ENCODE measurements at regions of chr9 and their contacts with region 1.

Region 1: DNA sequence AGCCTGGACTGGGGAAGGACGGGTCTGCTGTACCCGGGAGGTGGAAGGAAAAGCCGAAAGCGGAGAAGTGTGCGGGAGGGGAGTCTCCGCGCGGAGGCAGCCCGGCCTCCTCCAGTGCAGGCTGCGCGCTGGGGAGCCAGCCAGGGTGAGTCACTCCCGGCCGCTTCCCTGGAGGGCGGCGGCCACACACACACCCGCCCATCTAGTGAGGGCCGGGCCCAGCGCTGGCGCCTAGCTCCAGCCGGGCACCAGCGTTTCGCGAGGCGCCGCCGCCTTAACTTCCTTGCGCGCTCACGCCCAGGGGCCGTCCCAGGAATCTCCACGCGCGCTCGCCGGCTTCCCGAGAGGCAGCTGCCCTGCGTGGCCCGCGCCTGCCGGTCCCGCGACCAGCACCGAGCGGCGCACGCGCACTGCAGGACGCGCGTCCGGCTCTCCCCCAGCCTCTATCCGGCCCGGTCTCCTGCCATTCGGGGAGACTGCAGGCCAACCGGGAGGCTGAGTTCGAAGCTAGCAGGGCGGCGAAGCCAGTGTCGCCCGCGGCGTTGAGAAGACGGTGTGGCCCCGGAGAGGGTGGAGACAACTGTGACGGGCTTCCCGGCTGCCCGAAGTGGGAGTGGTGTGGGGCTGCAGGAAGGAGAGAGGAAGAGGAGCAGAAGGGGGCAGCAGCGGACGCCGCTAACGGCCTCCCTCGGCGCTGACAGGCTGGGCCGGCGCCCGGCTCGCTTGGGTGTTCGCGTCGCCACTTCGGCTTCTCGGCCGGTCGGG is at the start of gene JAK2:
- DNase-seq: peak; percentile 87
- ATAC-seq: peak; percentile 83
- H3K4me3 ChIP-seq: peak within 1 kb of the TSS; percentile 85
- H3K27ac ChIP-seq: peak within 1 kb of the TSS; percentile 93
- H3K4me1 ChIP-seq: peaks cover 46% of the 10 kb centered on the region
- H3K27me3 ChIP-seq: no peaks in the 10 kb centered on the region
- CTCF ChIP-seq: no peak; the same call in 1 of the 2 replicates
- total RNA-seq, gene JAK2: 9.9 and 11.2 TPM in 2 replicates

Region 2: GRCh38 chr9:4548811-4549725 is 435.7 kb before region 1 on chr9:
- CTCF ChIA-PET with region 1: no interaction called
- POLR2A ChIA-PET with region 1: no interaction called
- intact Hi-C with region 1: no loop called
- DNase-seq: peak; percentile 45
- ATAC-seq: peak; percentile 81
- H3K4me3 ChIP-seq: no peak overlapping the region
- H3K27ac ChIP-seq: no peak overlapping the region
- H3K4me1 ChIP-seq: no peaks in the 10 kb centered on the region
- H3K27me3 ChIP-seq: no peaks in the 10 kb centered on the region
- CTCF ChIP-seq: peak; percentile 65

Region 3: DNA sequence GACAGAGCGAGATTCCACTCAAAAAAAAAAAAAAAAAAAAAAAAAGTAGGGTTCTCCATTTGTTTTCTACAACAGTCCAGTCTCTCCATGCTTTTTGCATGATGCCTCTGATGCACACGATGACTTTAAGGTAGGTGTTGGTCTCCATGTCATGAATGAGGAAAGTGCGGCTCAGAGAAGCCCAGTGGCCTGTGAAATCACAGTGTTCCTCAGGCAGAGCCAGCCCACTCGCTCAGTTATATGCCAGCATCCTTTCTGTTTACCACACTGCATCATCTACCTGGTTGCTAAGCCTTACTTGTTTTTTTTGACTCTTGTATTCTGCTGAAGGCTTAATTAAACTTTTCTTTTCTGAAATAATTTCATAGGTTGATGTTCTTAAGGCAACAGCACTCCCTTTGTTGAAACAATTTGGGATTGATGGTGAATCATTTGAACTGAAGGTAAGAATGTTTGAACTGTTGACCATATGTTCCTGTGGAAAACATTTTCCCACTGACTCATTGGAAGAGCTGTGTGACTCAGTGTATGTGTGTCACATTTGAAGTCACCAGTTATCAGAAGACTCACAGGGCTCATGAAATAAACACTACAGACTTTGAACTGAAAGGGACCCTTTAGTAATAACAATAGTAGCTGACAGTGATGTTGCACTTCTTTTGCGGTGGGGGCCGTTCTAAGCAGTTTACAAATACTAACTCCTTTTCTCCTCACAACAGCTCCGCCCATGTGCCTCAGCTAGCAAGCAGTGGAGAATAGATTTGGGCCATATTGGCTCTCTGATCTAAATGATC is 151.8 kb before region 1 on chr9:
- CTCF ChIA-PET with region 1: interaction called, 3 read pairs
- POLR2A ChIA-PET with region 1: interaction called, 5 read pairs
- intact Hi-C with region 1: loop called (anchors 5 kb)
- DNase-seq: peak; percentile 96
- ATAC-seq: peak; percentile 85
- H3K4me3 ChIP-seq: 0 out of 2 replicates have a peak overlapping the region, but pooled peaks have one; percentile 2
- H3K27ac ChIP-seq: peak overlapping the region; percentile 97
- H3K4me1 ChIP-seq: peaks cover 78% of the 10 kb centered on the region
- H3K27me3 ChIP-seq: no peaks in the 10 kb centered on the region
- CTCF ChIP-seq: no peak

Region 4: DNA sequence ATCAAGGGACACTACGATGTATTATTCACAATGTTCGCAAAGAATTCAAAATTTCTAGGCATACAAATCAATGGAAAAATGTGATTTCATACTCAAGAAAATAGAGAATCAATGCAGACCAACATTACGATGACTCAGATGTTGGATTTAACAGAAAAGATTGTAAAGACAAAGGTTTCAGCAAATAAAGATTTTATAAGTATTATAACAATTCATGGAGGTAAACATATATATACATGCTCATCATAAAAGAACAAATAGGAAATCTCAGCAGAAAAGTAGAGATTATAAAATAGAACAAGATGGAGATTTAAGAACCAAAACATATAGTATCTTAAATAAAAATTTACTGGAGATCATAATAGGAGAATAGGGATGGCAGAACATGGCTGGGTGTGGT is 93.1 kb before region 1 on chr9:
- CTCF ChIA-PET with region 1: no interaction called
- POLR2A ChIA-PET with region 1: no interaction called
- intact Hi-C with region 1: loop called (anchors 2 kb)
- DNase-seq: peak; percentile 49
- ATAC-seq: peak; percentile 29; the same call in 1 of the 2 replicates
- H3K4me3 ChIP-seq: no peak overlapping the region
- H3K27ac ChIP-seq: peak overlapping the region; percentile 96
- H3K4me1 ChIP-seq: peaks cover 42% of the 10 kb centered on the region
- H3K27me3 ChIP-seq: no peaks in the 10 kb centered on the region
- CTCF ChIP-seq: no peak

Region 5: DNA sequence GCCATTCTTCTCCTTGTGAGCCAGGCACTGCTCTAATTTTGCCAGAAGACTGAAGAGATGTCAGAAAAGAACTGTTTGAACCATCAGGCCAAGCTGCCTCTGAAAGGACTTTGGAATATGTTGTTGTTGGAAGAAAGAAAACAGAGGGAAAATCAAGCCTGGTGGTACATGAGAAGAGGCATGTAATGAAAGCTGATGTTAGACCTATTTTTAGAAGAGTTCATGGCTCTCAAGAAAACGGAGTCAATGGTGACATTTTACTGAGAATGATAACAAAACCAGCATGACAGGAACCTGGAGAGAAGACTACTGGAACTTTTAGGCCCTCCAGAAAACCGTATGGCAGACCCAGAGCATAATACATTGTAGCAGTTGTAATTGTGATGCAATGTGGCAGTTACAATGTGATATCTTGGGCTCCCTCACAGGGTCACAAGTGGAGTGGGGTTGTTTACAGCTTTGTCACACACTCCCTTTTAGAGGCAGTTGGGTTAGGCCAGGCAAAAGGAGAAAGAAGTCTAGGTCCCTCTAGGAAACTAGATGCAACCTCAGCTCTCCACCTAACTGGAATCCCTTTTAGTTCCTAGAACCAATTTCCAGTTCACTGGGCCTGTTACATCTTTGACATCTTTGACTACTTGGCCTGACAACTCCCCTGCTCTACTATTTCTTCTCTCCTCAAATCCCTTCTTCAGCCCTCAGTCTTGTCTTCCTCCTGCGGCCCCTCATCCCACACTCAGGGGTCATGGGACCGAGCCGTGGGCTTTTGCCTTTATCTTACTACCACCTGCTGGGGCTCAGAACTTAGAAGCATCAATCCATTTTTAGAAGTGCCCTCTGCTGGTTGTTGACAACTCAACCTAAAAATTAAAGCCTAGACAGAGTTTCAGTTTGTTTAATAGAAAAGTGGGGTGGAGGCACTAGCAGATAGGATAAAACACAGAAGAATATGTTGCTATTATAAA is 60.9 kb before region 1 on chr9:
- CTCF ChIA-PET with region 1: no interaction called
- POLR2A ChIA-PET with region 1: no interaction called
- intact Hi-C with region 1: loop called (anchors 2 kb)
- DNase-seq: peak; percentile 53
- ATAC-seq: peak; percentile 45; the same call in 1 of the 2 replicates
- H3K4me3 ChIP-seq: no peak overlapping the region
- H3K27ac ChIP-seq: peak overlapping the region; percentile 99
- H3K4me1 ChIP-seq: peaks cover 34% of the 10 kb centered on the region
- H3K27me3 ChIP-seq: no peaks in the 10 kb centered on the region
- CTCF ChIP-seq: peak; percentile 74